ENCODE measurements at regions of chr11 and their contacts with region 1.

Region 1: DNA sequence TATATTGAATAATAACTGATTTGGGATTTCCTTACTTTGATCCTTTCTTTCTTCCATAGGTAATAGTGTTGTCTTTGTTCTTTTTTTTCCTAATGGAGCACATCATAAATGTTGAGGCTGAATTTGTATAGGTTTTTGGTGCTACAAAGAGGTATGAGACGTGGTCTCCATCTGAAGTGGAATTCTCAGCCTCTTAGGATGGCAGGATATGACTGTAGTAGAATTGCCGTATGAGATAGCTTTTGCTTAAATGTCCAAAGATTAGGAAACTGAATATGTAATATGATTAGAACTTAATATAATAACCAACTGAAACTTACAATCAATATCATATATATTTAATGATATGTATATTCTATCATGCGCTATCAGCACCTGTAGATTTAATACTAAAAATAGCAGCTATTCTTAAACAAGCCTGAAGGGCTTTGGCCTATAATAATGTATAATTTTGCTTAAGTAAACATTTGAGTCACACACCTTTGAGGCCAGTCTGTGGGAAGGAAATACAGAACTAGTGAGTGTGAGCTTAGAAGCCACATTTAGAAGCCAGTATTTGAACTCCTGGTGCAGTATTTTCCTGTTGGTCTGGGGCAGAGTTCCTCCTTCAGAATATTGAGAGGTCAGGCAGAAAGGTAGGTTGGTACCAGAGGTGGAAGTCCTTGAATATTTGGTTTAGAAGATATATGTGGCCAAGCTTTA is 62.6 kb downstream of the SWAP70 start:
- DNase-seq: peak; percentile 84
- H3K4me3 ChIP-seq: peak overlapping the region in 1 of 3 experiments; percentile 13
- H3K27ac ChIP-seq: peak overlapping the region; percentile 65
- H3K4me1 ChIP-seq: peaks cover 35% of the 10 kb centered on the region
- H3K27me3 ChIP-seq: no peaks in the 10 kb centered on the region
- CTCF ChIP-seq: no peak
- POLR2A ChIP-seq: peak; percentile 44

Region 2: DNA sequence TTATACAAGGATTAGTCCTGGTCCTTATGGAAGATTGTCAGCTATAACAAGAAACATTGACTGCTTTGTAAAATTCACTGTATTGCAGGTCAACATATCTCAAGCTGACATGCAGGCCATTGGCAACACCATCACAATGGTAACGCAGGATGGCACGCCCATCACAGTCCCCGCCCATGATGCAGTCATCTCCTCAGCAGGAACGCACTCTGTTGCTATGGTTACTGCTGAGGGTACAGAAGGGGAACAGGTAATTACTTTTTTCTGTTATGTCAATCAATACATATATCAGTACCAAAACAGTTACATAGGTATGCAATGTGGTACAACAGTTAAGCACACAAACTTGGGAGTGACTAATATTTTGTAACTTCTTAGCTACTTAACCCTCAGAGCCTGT is 210.4 kb before region 1 on chr11:
- CTCF ChIA-PET with region 1: no interaction called
- POLR2A ChIA-PET with region 1: no interaction called
- dilution Hi-C with region 1: no loop called
- intact Hi-C with region 1: no loop called
- DNase-seq: no peak
- H3K4me3 ChIP-seq: no peak overlapping the region
- H3K27ac ChIP-seq: no peak overlapping the region
- H3K4me1 ChIP-seq: no peaks in the 10 kb centered on the region
- H3K27me3 ChIP-seq: no peaks in the 10 kb centered on the region
- CTCF ChIP-seq: no peak
- POLR2A ChIP-seq: no peak

Region 3: GRCh38 chr11:9639985-9640384 is 86.5 kb before region 1 on chr11:
- CTCF ChIA-PET with region 1: no interaction called
- POLR2A ChIA-PET with region 1: no interaction called
- dilution Hi-C with region 1: no loop called
- intact Hi-C with region 1: no loop called
- DNase-seq: no peak
- H3K4me3 ChIP-seq: no peak overlapping the region
- H3K27ac ChIP-seq: no peak overlapping the region
- H3K4me1 ChIP-seq: peaks cover 9% of the 10 kb centered on the region
- H3K27me3 ChIP-seq: no peaks in the 10 kb centered on the region
- CTCF ChIP-seq: no peak
- POLR2A ChIP-seq: no peak

Region 4: DNA sequence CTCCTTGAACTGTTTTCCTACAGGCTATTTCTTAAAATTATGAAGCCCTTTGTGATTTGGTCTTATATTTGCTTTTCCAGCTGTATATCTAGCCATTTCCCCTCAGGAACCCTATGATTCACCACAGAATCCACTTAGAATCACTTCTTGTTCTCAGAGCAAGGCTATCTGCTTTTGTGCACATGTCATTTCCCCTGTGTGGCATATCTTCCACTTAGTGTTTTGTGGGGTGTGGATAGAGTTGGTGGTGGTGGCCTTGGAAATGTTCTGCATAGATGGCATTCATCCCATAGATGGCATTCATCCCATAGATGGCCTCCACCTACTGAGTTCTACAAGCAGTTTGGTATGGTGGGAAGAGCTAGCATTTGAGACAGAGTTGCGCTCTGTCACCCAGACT is 17.9 kb before region 1 on chr11:
- CTCF ChIA-PET with region 1: interaction called, 4 read pairs
- POLR2A ChIA-PET with region 1: interaction called, 3 read pairs
- dilution Hi-C with region 1: no loop called
- intact Hi-C with region 1: loop called (anchors 1 kb)
- DNase-seq: peak; percentile 84
- H3K4me3 ChIP-seq: no peak overlapping the region
- H3K27ac ChIP-seq: peak overlapping the region; percentile 38
- H3K4me1 ChIP-seq: peaks cover 59% of the 10 kb centered on the region
- H3K27me3 ChIP-seq: no peaks in the 10 kb centered on the region
- CTCF ChIP-seq: no peak
- POLR2A ChIP-seq: no peak

Region 5: DNA sequence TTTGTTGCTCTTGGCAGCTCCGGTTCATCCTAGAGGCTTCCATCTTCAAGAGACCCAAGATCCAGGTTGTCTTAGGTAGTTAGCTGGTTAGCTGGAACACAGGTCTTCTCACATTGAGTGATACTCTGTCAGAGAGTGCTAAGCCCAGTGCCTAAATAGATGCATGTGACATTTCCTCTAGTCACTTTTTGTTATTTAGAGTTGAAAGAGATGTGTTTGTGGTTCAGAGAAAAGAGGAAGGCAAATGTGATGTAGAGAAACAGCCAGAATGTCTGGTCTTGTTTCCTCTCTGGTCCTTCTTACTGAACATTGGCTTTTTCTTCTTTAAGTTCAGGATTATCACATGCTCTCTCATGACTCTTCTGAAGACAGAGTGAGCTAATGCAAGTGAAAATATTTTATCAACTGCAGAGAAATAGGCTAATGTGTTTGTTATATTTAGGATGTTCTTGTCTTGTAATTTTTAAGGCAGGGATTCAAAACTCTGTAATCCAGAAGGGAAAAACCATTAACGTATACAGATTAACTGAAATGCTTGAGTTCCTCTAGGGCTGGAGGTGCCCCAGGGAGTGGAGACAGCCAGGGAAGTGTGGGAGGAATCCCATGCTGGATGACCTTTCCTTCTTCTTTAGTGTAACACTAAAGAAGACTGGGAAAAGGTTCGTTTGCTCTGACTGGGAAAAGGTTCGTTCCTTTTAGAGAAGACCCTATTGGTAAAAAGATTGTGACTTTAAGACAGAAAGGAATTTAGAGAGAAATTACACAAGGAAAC is 12.8 kb after region 1 on chr11:
- CTCF ChIA-PET with region 1: interaction called, 11 read pairs
- POLR2A ChIA-PET with region 1: interaction called, 3 read pairs
- dilution Hi-C with region 1: no loop called
- intact Hi-C with region 1: no loop called
- DNase-seq: no peak
- H3K4me3 ChIP-seq: no peak overlapping the region
- H3K27ac ChIP-seq: no peak overlapping the region
- H3K4me1 ChIP-seq: no peaks in the 10 kb centered on the region
- H3K27me3 ChIP-seq: no peaks in the 10 kb centered on the region
- CTCF ChIP-seq: no peak
- POLR2A ChIP-seq: no peak

Region 6: DNA sequence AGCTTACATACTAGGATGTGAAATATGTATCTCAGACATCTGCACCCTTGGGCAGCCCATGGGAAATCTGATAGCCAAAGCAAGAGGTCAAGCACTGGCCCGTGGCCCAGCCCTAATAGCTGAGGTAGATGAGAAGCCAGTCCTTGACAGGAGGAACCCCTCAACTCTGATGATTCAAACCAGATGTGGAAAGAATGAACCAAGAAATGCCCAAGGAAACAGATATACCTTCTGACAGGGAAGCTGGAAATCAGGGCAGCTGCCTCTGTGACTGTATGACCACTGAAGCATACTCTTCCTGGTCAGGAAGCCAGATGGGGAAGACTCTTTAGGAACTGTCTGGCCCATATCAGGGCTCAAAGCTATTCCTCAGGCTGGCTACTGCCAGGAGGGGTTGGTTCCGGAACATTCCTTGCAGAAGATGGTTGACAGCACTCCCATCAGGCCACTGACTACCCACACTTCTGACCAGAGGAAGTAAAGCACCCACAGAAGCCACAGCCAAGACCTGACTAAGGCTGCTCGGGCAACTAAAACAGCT is 61.6 kb after region 1 on chr11:
- CTCF ChIA-PET with region 1: no interaction called
- POLR2A ChIA-PET with region 1: no interaction called
- dilution Hi-C with region 1: no loop called
- intact Hi-C with region 1: no loop called
- DNase-seq: no peak
- H3K4me3 ChIP-seq: no peak overlapping the region
- H3K27ac ChIP-seq: no peak overlapping the region
- H3K4me1 ChIP-seq: no peaks in the 10 kb centered on the region
- H3K27me3 ChIP-seq: no peaks in the 10 kb centered on the region
- CTCF ChIP-seq: no peak
- POLR2A ChIP-seq: no peak

Measured in endothelial cell of umbilical vein (primary cell).